ENCODE measurements at regions of chr11 and their contacts with region 1.

Region 1: DNA sequence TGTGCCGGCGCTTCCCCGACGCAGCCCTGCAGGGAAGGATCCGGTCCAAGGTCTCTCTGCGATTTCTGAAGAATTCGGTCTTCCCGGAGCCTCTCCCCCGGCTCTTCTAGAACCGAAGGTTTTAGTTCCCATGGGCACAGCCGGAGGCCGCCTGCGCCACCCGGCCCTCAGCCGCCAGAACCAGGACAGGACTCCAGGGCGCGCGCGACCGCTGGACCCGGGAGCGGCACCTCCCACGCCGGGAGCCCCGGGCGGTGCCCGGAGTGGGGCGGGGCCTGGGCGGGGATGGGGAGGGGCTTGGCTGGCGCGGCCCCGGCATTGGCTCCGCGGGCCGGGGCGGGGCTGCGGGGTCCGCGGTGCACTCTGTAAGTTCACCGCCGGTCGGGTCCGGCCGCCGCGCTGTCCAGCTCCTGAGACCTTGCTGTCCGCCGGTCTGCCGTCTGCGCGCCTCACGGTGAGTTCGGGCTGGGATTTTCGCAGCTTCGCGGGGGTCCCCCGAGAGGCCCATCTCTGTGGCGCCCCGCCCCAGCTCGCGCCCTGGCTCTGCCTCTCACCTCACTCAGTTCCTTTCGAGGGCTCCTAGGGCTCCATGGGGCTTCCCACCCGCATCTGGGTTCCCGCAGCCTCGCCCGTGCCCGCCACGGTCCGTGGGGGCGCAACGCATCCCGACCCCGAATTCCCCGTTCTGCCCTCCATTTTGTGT is at the start of gene CDC42EP2:
- DNase-seq: peak; percentile 93
- H3K4me3 Mint-ChIP-seq: peak within 1 kb of the TSS; percentile 83
- H3K27ac Mint-ChIP-seq: peak within 1 kb of the TSS; percentile 43
- H3K4me1 Mint-ChIP-seq: peaks cover 9% of the 10 kb centered on the region
- H3K27me3 Mint-ChIP-seq: peaks cover 7% of the 10 kb centered on the region
- total RNA-seq, gene CDC42EP2: 3.0 and 3.4 TPM in 2 replicates

Region 2: GRCh38 chr11:65204646-65205601 is 109.7 kb before region 1 on chr11:
- intact Hi-C with region 1: loop called (anchors 1 kb)
- DNase-seq: peak; percentile 84
- H3K4me3 Mint-ChIP-seq: no peak overlapping the region
- H3K27ac Mint-ChIP-seq: no peak overlapping the region
- H3K4me1 Mint-ChIP-seq: peaks cover 6% of the 10 kb centered on the region
- H3K27me3 Mint-ChIP-seq: no peaks in the 10 kb centered on the region

Region 3: DNA sequence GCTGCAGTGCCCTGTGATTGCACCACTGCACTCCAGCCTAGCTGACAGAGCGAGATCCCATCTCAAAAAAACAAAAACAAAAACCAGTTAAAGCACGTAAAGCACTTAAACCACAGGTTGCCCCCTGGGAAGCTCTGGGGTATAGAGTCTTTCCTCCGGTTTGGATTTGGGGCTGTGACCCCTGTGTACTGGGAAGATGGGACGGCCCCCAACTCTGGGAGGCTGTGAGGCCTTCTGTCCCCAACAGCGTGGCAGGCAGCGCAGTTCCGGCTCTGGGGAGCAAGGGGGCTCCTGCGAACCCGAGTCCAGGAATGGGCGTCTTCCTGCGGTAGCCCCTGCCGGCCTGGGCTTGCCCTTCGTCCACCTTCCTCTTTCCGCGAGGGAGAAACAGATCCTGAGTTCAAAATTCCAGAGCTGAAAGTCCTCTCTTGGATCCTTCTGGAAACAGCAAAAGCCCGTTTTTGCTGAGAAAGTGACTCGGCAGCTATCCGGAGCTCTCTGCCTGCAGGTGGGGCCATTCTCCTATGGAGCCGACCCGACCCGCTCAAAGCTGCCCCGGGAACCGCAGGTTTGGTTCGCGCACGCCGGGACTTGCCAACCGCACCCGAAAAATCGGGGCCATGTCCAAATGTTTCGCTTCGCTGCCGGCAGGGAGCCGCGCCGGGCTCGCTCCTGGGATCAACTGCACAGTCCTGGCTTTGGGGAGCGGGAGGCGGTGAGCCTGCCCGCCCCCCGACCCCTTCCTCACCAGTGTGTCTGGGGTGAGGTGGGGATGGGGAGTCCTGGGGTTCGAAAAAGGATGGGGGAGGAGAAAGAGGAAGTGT is 89.2 kb before region 1 on chr11:
- intact Hi-C with region 1: loop called (anchors 5 kb)
- DNase-seq: peak; percentile 87
- H3K4me3 Mint-ChIP-seq: peak overlapping the region; percentile 85
- H3K27ac Mint-ChIP-seq: no peak overlapping the region
- H3K4me1 Mint-ChIP-seq: peaks cover 9% of the 10 kb centered on the region
- H3K27me3 Mint-ChIP-seq: peaks cover 26% of the 10 kb centered on the region

Region 4: GRCh38 chr11:65274735-65275682 is 39.6 kb before region 1 on chr11:
- intact Hi-C with region 1: loop called (anchors 1 kb)
- DNase-seq: peak; percentile 81
- H3K4me3 Mint-ChIP-seq: no peak overlapping the region
- H3K27ac Mint-ChIP-seq: no peak overlapping the region
- H3K4me1 Mint-ChIP-seq: peaks cover 12% of the 10 kb centered on the region
- H3K27me3 Mint-ChIP-seq: no peaks in the 10 kb centered on the region

Measured in activated CD4-positive, alpha-beta T cell treated with anti-CD3 and anti-CD28 coated beads, Interleukin-2, amount 10 ng/mL, durations not matched to agents 24 days and 14 days (primary cell).